ENCODE measurements at regions of chr1 and their contacts with region 1.

Region 1: DNA sequence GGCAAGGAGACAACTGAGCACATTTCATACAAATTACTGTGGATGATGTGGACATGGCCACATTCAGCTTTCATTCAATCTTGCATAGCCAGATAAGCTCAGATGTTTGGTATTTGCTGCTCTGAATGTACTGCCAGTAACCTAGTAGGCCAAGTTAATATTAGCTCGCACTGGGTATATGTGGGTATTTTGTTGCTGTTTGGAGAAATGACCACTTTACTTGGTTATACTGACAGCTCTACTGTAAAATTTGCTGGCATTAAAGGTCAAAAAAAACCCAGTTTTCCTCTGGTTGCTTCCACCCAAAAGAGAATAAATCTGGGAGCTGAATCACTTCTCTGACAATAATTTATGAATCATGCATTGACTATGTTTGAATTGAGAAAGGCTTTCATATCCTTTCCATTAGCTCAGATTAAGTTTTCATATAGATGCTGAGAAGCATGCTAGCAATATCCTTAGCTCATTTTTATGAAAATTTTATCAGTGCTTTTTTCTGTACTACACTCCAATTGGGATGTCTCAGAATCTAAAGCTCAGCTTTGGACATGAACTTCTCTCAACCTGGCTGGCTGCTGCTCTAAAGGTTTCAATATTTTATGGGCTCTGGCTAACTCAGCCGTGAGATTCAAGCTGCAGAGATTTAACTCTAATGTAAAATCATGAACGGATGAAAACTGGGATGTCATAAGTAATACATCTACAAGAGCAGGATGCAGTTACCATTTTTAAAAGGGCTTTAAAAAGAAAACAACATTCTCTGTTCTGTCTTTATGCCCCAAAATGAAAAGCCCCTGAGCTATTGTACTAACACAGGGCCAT is 330.0 kb downstream of the BARHL2 start:
- DNase-seq: no peak
- ATAC-seq: peak; percentile 71
- H3K4me3 ChIP-seq: no peak overlapping the region
- H3K27ac ChIP-seq: peak overlapping the region; percentile 57 to 89
- H3K4me1 ChIP-seq: peaks cover 2 to 4% of the 10 kb centered on the region in 2 donors
- H3K27me3 ChIP-seq: no peaks in the 10 kb centered on the region

Region 2: DNA sequence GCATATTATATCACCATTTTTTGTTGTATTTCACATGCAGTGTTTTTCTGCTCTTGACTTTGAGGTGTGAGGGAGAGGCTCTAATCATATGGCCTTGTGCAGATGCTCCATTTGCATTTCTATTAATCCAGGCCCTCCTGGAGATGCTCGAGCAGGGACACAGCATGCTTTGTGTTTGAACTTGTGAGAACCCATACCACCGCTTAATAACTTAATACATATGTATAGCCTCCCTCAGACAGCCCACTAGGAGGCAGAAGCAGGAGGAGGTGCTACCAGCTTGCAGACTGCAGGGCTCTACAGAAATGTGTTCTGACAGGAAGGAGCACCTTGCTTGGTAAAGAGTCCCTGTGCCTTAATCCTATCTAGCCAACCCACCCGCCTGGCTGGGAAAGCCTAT is 174.8 kb after region 1 on chr1:
- intact Hi-C with region 1: loop called in 1 of 2 experiments (anchors 5 kb)
- DNase-seq: no peak
- ATAC-seq: no peak
- H3K4me3 ChIP-seq: no peak overlapping the region
- H3K27ac ChIP-seq: no peak overlapping the region
- H3K4me1 ChIP-seq: peaks cover 2 to 6% of the 10 kb centered on the region in 2 donors
- H3K27me3 ChIP-seq: no peaks in the 10 kb centered on the region

Measured in aorta (tissue), 5 donors.